Pancreas (tissue), 10 donors: ENCODE measurements at regions of chr16 and their contacts with region 1.

Region 1: GRCh38 chr16:12896562-12896961 is 4.8 kb upstream of the SHISA9 start:
- DNase-seq: peak in 1 of 6 donors; percentile 20
- ATAC-seq: peak in 3 of 4 donors; percentile 22 to 70 (median 52)
- H3K4me3 ChIP-seq: no peak overlapping the region
- H3K27ac ChIP-seq: no peak overlapping the region
- H3K4me1 ChIP-seq: no peaks in the 10 kb centered on the region
- H3K27me3 ChIP-seq: peaks cover 0 to 3% (median 0%) of the 10 kb centered on the region in 4 donors
- CTCF ChIP-seq: peak; percentile 31 to 42 (median 38)

Region 2: GRCh38 chr16:13453938-13454553 is 557.5 kb after region 1 on chr16:
- intact Hi-C with region 1: loop called (anchors 5 to 10 kb)
- DNase-seq: peak in 3 of 6 donors; percentile 5 to 39 (median 19)
- ATAC-seq: peak; percentile 52 to 84 (median 70)
- H3K4me3 ChIP-seq: no peak overlapping the region
- H3K27ac ChIP-seq: no peak overlapping the region
- H3K4me1 ChIP-seq: no peaks in the 10 kb centered on the region
- H3K27me3 ChIP-seq: no peaks in the 10 kb centered on the region
- CTCF ChIP-seq: peak; percentile 45 to 55 (median 50)